ENCODE measurements at regions of chr19 and their contacts with region 1.

Region 1: DNA sequence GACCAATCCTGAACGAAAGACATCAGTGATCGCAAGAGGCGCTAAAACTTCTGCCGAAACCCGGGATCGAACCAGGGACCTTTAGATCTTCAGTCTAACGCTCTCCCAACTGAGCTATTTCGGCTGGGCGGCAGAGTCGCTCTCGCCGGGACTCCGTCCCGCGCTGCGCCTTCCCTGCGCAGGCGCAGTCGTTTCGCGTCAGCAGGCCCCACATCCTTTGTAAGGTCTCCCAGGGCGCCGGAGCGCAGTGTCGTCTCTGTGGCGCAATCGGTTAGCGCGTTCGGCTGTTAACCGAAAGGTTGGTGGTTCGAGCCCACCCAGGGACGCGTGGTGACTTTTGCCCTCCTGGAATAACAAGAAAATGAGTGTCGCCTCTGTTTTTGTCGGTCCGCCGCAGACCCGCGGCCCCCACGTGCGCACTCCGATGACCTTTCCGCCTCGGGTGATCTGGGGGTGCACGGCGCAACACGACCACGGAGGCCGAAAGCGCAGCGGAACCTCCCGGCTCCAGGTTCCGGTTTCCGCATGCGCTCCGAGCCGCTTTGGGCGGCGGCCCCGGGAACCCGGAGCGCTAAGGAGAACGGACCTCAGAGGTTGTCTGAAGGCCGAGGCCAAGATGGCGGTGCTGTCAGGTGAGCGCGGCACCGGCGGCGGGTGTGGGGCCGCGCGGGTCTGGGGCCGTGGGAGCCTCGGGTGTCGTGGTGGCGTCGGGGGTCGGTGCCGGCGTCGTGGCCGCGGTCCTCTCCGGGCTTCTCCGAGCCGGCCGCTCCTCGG is at the start of gene NDUFS7:
- DNase-seq: peak; percentile 94
- ATAC-seq: peak; percentile 88
- H3K4me3 Mint-ChIP-seq: peak within 1 kb of the TSS; percentile 81
- H3K27ac Mint-ChIP-seq: peak within 1 kb of the TSS; percentile 92
- H3K4me1 Mint-ChIP-seq: peaks cover 21% of the 10 kb centered on the region
- H3K27me3 Mint-ChIP-seq: peaks cover 2% of the 10 kb centered on the region
- total RNA-seq, gene NDUFS7: 93.4 to 113 TPM

Region 2: GRCh38 chr19:1020868-1021425 is 362.6 kb before region 1 on chr19 and contains the start of gene TMEM259:
- CTCF ChIA-PET with region 1: no interaction called
- POLR2A ChIA-PET with region 1: no interaction called
- intact Hi-C with region 1: loop called in 1 of 2 experiments (anchors 1 kb)
- DNase-seq: peak; percentile 99
- ATAC-seq: peak; percentile 90
- H3K4me3 Mint-ChIP-seq: peak within 1 kb of the TSS; percentile 94
- H3K27ac Mint-ChIP-seq: peak within 1 kb of the TSS; percentile 96
- H3K4me1 Mint-ChIP-seq: peaks cover 35% of the 10 kb centered on the region
- H3K27me3 Mint-ChIP-seq: no peaks in the 10 kb centered on the region
- total RNA-seq, gene TMEM259: 106 to 128 TPM

Region 3: GRCh38 chr19:1275260-1275975 is 108.1 kb before region 1 on chr19 and contains the start of gene FAM174C:
- CTCF ChIA-PET with region 1: interaction called, 3 read pairs
- POLR2A ChIA-PET with region 1: no interaction called
- intact Hi-C with region 1: loop called (anchors 1 to 5 kb)
- DNase-seq: peak; percentile 99
- ATAC-seq: peak; percentile 82
- H3K4me3 Mint-ChIP-seq: peak within 1 kb of the TSS; percentile 83
- H3K27ac Mint-ChIP-seq: peak within 1 kb of the TSS; percentile 95
- H3K4me1 Mint-ChIP-seq: peaks cover 54% of the 10 kb centered on the region
- H3K27me3 Mint-ChIP-seq: no peaks in the 10 kb centered on the region
- total RNA-seq, gene FAM174C: 75.3 to 88.3 TPM

Region 4: DNA sequence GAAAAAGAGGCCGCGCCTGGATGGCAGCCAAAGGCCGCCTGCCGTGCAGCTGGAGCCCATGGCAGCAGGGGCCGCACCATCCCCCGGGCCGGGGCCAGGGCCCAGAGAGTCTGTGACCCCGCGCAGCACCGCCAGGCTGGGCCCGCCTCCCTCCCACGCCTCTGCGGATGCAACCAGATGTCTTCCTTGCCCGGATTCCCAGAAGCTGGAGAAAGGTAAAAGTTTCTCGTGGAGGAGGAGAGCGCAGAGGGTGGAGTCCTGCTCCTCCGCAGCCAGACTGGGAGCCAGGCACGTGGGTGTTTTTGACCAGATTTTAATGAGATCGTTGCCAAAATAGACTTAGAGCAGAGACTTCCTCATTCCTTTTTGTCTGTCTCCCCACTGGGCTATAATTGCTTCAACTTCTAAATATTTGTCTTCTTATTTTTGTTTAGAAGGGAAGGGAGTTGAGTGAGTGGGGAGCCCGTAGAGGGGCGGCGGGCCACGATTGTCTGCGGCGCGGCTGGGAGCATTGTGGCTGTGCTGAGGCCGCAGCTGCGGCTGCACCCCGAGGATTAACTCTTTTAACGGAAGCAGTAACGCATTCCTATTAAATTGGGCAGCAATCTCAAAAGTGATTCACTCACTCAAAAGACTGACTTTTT is 22.6 kb before region 1 on chr19:
- CTCF ChIA-PET with region 1: interaction called, 10 read pairs
- POLR2A ChIA-PET with region 1: no interaction called
- intact Hi-C with region 1: no loop called
- DNase-seq: no peak
- ATAC-seq: no peak
- H3K4me3 Mint-ChIP-seq: no peak overlapping the region
- H3K27ac Mint-ChIP-seq: no peak overlapping the region
- H3K4me1 Mint-ChIP-seq: peaks cover 30% of the 10 kb centered on the region
- H3K27me3 Mint-ChIP-seq: no peaks in the 10 kb centered on the region

Region 5: GRCh38 chr19:1438035-1438932 is 54.8 kb after region 1 on chr19 and contains the start of gene RPS15:
- CTCF ChIA-PET with region 1: no interaction called
- POLR2A ChIA-PET with region 1: no interaction called
- intact Hi-C with region 1: loop called in 1 of 2 experiments (anchors 1 kb)
- DNase-seq: peak; percentile 98
- ATAC-seq: peak; percentile 86
- H3K4me3 Mint-ChIP-seq: peak within 1 kb of the TSS; percentile 94
- H3K27ac Mint-ChIP-seq: peak within 1 kb of the TSS; percentile 99
- H3K4me1 Mint-ChIP-seq: peaks cover 34% of the 10 kb centered on the region
- H3K27me3 Mint-ChIP-seq: no peaks in the 10 kb centered on the region
- total RNA-seq, gene RPS15: 1,716 to 1,858 TPM

Region 6: DNA sequence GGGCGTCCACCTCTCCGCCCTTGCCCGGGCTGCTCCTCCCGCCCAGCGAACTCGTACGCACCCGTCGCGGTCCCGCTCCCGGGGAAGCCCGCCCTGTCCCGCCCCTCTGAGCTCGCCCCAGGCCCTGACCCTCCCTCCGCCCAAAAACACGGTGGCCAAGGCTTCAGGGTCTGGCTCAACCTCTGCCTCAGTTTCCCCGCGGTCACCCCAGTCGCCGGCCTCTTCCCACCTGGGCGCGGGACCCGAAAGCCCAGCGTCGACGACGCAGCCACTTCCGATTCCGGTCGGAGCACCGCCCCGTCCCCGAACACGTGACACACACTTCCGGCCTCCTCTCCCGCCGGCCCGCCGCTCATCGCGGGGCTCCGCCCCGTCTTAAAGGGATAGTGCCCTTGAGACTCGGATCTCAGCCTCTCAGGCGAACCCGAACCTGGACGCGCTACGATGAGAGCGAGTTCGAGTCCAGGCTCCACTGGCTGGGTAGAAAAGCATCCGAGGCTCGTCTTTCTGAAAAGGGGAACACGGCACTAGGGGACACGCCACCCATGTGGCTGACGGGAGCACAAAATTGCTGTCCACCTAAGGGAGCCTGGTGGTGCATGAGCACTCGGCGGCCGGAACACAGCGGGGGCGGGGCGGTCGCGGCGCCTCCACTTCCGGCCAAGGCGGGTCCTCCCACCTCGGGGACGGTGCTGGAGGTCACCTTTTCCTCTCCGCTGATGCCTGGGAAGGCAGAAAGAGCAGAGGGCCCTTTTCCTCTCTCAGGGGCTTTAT is 95.6 kb after region 1 on chr19 and contains the start of gene C19orf25:
- CTCF ChIA-PET with region 1: no interaction called
- POLR2A ChIA-PET with region 1: no interaction called
- intact Hi-C with region 1: loop called in 1 of 2 experiments (anchors 1 kb)
- DNase-seq: peak; percentile 97
- ATAC-seq: peak; percentile 98
- H3K4me3 Mint-ChIP-seq: peak within 1 kb of the TSS; percentile 96
- H3K27ac Mint-ChIP-seq: peak within 1 kb of the TSS; percentile 95
- H3K4me1 Mint-ChIP-seq: peaks cover 6% of the 10 kb centered on the region
- H3K27me3 Mint-ChIP-seq: no peaks in the 10 kb centered on the region
- total RNA-seq, gene C19orf25: 19.9 to 26.9 TPM

Region 7: DNA sequence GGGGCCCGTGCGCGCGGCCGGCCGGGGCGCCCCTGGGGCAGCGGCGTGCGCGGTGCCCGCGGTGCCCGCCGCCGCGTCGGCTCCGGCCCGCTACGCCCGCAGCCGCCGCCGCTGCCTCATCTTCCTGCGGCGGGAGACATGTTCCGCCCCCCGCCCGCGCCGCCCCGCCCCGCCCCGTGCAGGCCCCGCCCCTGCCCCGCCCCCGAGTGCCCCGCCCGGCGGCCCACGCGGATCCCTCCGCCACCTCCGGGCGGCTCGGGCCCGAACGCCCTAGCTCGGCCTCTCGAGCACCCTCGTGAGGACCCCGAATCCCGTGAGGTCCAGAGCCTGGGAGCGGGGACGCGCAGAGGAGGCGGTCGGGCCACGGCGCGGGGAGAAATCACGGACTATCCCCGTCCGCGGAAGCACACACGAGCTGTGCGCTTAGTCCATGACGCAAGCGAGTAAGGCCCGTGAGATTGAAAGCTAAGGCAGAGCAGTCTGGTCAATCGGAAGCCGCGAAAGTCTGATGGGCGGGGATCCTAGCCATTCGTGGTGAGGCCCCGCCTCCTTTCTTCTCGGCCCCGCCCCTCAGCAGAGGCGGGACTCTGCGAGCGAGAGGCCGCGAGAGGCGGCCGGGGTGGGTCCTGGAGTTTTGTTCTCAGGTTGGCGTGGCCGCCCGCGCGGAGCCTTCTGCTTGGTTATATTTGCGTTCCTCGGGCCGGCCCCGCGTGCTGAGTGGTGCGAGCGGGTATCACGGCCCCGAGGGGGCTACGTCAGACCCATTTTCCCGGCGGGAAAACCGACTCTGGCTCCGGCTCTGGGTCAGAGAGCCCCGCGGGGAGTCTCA is 269.2 kb after region 1 on chr19 and contains the start of gene TCF3:
- CTCF ChIA-PET with region 1: no interaction called
- POLR2A ChIA-PET with region 1: no interaction called
- intact Hi-C with region 1: loop called in 1 of 2 experiments (anchors 2 kb)
- DNase-seq: peak; percentile 99
- ATAC-seq: peak; percentile 94
- H3K4me3 Mint-ChIP-seq: peak within 1 kb of the TSS; percentile 88
- H3K27ac Mint-ChIP-seq: peak within 1 kb of the TSS; percentile 91
- H3K4me1 Mint-ChIP-seq: peaks cover 32% of the 10 kb centered on the region
- H3K27me3 Mint-ChIP-seq: no peaks in the 10 kb centered on the region
- total RNA-seq, gene TCF3: 115 to 133 TPM

Region 8: GRCh38 chr19:1905071-1905862 is 521.8 kb after region 1 on chr19 and contains the starts of genes ADAT3 and SCAMP4:
- CTCF ChIA-PET with region 1: no interaction called
- POLR2A ChIA-PET with region 1: no interaction called
- intact Hi-C with region 1: no loop called
- DNase-seq: peak; percentile 100
- ATAC-seq: peak; percentile 98
- H3K4me3 Mint-ChIP-seq: peak within 1 kb of the TSS; percentile 84
- H3K27ac Mint-ChIP-seq: peak within 1 kb of the TSS; percentile 82
- H3K4me1 Mint-ChIP-seq: peaks cover 45% of the 10 kb centered on the region
- H3K27me3 Mint-ChIP-seq: no peaks in the 10 kb centered on the region
- total RNA-seq, gene ADAT3: 5.6 to 6.1 TPM
- total RNA-seq, gene SCAMP4: 20.5 to 25.6 TPM

Measured in activated CD4-positive, alpha-beta T cell treated with anti-CD3 and anti-CD28 coated beads for 36 hours (primary cell).